ENCODE measurements at regions of chr1 and their contacts with region 1.

Region 1: DNA sequence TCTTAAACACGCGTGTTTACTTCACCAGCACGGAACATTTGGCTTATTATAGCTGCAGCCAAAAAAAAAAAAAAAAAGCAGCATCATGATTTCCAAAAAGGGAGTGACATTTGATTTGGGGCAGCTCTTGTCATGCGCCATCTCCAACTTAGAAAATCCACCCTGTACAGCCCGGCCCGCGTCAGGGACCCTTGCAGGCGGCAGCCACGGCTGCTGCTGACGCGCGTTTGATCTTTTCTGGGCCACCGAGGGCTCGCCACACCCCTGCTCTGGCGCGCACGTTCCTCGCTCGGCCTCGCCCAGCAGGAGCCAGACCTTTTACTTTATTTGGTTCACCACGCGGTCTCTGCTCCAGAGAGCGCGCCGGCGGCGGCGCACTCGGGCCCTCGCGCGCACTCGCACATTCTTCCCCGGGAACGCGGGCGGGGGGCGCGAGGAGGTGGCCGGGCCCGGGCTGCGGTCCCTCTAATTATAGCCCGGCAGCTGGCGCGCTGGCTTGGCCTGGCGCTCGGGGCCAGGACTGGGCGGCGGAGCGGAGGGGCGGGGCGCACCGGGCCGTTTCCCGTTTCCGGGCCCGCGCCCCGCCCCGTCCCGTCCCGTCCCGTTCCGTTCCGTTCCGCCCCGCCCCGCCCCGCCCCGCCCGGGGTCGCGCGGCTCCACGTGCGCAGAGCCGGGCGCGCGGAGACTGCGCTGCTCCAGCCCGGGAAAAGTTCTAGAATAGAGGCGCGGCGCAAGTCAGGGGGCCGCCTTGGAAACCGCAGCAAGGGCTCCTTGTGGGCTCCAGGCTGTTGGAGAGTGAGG is 10.2 kb downstream of the IRF2BP2 start:
- DNase-seq: peak; percentile 96
- ATAC-seq: peak; percentile 91

Region 2: GRCh38 chr1:234499119-234499942 is 100.5 kb before region 1 on chr1:
- intact Hi-C with region 1: loop called (anchors 5 kb)
- DNase-seq: peak; percentile 95
- ATAC-seq: peak; percentile 96

Region 3: DNA sequence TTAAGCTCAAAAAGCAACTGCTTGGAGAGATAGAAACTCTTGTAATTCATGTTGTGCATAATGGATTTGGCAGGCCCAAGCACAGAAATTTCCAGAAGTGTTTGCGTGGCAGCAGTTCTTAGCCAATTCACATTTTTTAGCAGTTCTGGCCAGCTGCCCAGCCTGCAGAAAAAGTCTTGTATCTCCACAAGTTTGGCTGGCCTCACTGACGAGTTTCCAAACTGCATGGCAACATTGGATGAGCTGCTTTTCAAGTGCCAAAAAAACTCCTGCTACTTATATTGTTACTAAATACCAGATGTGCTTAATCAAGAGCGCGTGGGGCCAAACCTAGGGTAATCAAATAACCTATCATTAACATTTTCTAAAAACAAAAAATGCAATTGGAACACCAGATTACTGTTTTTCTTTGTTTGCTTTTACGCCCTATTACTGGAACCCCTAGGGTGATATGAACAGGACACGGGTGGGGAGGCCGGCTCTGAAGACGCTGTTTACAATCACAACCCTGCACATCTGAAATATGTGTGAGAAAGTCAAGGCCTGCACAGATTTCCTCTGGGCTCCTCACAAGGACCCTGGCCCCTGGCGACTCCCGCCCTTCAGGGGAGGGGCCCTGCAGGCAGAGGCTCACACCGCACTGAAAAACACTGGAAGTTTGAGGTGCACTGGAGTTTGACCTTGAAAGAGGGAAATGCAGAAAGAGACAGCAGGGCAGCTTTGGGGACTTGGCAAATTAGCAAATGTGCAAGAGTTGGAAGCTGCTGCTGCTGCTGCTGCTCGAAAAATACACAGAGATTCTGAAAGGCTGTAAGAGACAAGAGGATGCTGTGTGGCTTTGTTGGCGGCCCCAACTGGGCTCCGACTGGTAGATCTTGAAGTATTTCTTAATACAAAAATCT is 65.6 kb before region 1 on chr1:
- intact Hi-C with region 1: loop called (anchors 2 kb)
- DNase-seq: peak; percentile 94
- ATAC-seq: peak; percentile 13

Region 4: DNA sequence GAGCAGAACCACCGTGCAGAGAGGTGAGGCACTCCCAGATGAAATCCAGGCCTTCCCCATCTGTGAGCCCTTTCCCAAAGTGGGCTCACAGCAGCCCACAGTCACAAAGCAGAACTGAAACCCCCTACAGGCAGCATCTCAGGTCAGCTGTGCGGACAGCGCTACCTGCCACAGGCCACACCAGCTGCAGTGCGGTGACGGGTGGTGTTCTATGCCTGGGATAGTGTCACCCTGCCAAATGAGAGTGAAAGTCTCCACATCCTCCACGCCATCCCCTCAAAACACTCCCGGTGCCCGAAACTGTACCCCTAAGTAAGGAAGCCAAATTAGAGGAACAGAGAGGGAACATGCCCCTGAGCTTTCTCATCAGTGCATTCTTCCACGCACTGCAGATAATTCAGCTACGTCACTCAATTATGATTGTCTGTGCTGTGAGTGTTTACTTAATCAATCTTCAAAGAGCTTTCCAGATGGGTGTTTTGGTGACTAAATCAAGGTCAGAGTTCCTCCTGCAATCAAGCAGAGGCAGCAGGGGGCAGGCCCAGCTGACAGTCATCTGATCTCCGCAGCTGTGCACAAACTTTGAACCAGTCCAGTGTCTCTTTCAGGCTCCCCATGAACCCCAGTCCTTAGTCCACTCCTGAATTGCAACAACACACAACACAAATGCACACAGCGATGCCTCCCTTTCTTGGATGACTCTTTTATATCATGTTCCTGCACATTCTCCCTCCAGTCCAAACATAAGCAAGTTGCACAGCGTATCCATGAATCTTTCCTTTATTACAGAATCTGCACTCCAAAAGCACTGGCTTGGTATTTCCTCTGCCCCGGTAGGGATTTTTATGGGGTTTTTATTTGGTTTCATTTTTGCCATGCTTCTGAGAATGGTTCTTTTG is 378.8 kb after region 1 on chr1:
- intact Hi-C with region 1: loop called (anchors 10 kb)
- DNase-seq: peak; percentile 64
- ATAC-seq: peak; percentile 41

Region 5: DNA sequence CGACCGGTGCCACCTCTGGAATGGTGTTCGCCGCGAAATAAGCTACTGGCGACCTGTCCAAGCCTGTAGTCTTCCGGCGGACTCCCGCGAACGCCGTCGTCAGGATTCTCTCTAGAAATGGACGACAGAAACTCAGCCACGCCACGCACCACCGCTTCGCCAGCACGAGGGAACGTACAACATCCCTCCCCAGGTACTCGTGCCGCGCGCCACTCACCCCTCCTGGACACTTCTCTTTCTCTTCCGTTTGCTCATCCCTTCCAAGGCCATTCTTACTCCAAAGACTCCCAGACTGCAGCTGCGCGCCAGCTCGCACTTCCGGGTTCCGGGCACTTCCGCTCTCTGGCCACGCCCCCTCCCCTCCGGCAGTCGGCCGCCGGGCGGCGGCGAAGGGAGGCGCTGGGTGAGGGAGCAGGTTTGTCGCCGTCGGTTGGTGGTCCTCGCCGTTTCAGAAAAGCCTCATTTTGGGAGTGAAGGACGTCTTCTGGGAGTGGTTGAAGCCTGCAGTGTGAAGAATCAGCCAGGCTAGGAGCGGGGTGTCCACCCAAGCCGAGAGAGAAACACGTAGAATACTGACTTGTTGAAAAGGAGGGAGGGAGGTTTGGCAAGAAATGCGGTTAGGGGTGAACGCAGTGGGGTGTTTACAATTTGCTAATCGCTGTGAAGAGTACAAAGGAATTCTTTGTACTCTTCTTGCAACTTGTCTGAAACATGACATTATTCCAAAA is 561.3 kb after region 1 on chr1 and contains the start of gene RBM34:
- intact Hi-C with region 1: no loop called
- DNase-seq: peak; percentile 95
- ATAC-seq: peak; percentile 99
- total RNA-seq, gene RBM34: 58.7 TPM

Measured in left ventricle myocardium superior (tissue), 1 donor.